ENCODE measurements at regions of chr17 and their contacts with region 1.

Region 1: GRCh38 chr17:76199469-76199868 is 40.8 kb downstream of the RNF157 start:
- DNase-seq: peak; percentile 81
- ATAC-seq: peak; percentile 91
- H3K4me3 Mint-ChIP-seq: peak overlapping the region; percentile 21
- H3K27ac Mint-ChIP-seq: peak overlapping the region; percentile 92
- H3K4me1 Mint-ChIP-seq: peaks cover 64% of the 10 kb centered on the region
- H3K27me3 Mint-ChIP-seq: no peaks in the 10 kb centered on the region

Region 2: DNA sequence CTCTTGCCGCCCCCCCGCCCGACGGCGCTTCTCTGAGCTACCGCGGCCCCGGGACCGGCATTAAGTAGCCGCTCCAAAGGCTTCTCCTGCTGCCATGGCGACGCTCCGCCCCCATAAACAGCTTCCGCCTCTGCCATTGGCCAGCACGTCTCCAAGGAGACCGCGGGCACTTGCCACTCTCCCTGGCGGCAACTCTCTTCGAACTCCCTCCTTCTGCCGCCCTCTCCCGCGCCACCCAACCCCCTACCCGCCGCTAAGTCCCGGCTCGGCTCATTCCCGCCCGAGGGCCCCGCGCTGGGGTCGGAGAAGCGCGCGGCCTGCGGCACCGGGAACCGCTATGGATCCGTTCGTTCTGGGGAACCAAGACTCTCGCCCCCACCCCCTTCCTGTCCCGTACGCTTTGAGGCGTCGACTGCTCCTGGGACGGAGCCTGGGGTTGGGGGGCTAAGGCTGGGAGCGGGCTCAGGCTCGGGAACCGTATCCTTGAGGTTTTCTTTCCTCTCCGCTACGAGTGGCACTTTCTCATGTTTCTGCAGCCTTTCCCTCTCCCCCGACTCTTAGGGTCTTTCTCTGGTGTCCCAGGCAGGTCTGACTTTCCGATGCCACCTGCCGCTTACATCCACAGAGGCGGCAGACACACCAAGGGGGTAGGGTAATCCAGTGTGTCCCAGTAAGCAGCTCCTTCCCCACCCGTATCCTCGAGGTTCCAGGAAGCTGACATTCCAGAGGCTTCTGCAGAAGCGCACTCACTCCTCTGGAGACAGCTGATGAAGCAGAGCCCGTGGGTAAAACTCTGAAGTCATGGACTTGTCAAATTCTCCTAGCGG is 58.0 kb before region 1 on chr17 and contains the start of gene FOXJ1:
- CTCF ChIA-PET with region 1: no interaction called
- POLR2A ChIA-PET with region 1: no interaction called
- intact Hi-C with region 1: loop called in 1 of 2 experiments (anchors 1 kb)
- DNase-seq: peak; percentile 93
- ATAC-seq: peak; percentile 80
- H3K4me3 Mint-ChIP-seq: peak within 1 kb of the TSS; percentile 64
- H3K27ac Mint-ChIP-seq: no peak within 1 kb of the TSS
- H3K4me1 Mint-ChIP-seq: peaks cover 51% of the 10 kb centered on the region
- H3K27me3 Mint-ChIP-seq: peaks cover 9% of the 10 kb centered on the region
- total RNA-seq, gene FOXJ1: 0.47 to 0.53 TPM

Region 3: GRCh38 chr17:76153640-76154039 is 45.8 kb before region 1 on chr17:
- CTCF ChIA-PET with region 1: no interaction called
- POLR2A ChIA-PET with region 1: no interaction called
- intact Hi-C with region 1: no loop called
- DNase-seq: no peak
- ATAC-seq: no peak
- H3K4me3 Mint-ChIP-seq: no peak overlapping the region
- H3K27ac Mint-ChIP-seq: no peak overlapping the region
- H3K4me1 Mint-ChIP-seq: peaks cover 36% of the 10 kb centered on the region
- H3K27me3 Mint-ChIP-seq: no peaks in the 10 kb centered on the region

Measured in activated CD4-positive, alpha-beta T cell treated with anti-CD3 and anti-CD28 coated beads for 36 hours (primary cell).